Breast epithelium (tissue), 4 donors: ENCODE measurements at regions of chr18 and their contacts with region 1.

Region 1: GRCh38 chr18:9684881-9685614 is 23.1 kb upstream of the RAB31 start:
- DNase-seq: peak in 1 of 2 donors; percentile 53
- H3K4me3 ChIP-seq: peak overlapping the region in 2 of 3 donors; percentile 12 to 44
- H3K27ac ChIP-seq: peak overlapping the region; percentile 68 to 72
- H3K4me1 ChIP-seq: peaks cover 0 to 3% of the 10 kb centered on the region in 2 donors
- H3K27me3 ChIP-seq: no peaks in the 10 kb centered on the region
- CTCF ChIP-seq: no peak
- POLR2A ChIP-seq: no peak

Region 2: DNA sequence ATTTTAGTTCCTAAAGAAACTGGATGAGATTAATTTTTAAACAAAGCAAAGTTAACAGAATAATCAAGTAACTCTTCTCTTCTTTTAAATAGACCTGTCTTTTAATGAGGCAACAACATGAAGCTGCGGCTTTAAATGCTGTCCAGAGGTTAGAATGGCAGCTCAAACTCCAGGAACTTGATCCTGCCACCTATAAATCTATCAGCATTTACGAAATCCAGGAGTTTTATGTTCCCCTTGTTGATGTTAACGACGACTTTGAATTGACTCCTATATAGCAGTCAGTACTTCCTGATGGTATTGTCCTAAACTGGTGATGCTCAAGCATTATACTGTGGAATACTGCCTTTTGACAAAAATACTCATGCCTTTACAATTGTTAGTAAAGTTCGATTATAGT is 404.2 kb before region 1 on chr18:
- intact Hi-C with region 1: loop called (anchors 5 kb)
- DNase-seq: no peak
- H3K4me3 ChIP-seq: no peak overlapping the region
- H3K27ac ChIP-seq: no peak overlapping the region
- H3K4me1 ChIP-seq: no peaks in the 10 kb centered on the region
- H3K27me3 ChIP-seq: no peaks in the 10 kb centered on the region
- CTCF ChIP-seq: no peak
- POLR2A ChIP-seq: no peak

Region 3: GRCh38 chr18:9961041-9961440 is 276.0 kb after region 1 on chr18:
- intact Hi-C with region 1: no loop called
- DNase-seq: no peak
- H3K4me3 ChIP-seq: no peak overlapping the region
- H3K27ac ChIP-seq: no peak overlapping the region
- H3K4me1 ChIP-seq: no peaks in the 10 kb centered on the region
- H3K27me3 ChIP-seq: no peaks in the 10 kb centered on the region
- CTCF ChIP-seq: no peak
- POLR2A ChIP-seq: no peak